ENCODE measurements at regions of chr6 and their contacts with region 1.

Region 1: GRCh38 chr6:43489277-43490072 is 12.1 kb downstream of the TJAP1 start:
- DNase-seq: no peak
- ATAC-seq: no peak
- H3K4me3 ChIP-seq: no peak overlapping the region
- H3K27ac ChIP-seq: no peak overlapping the region
- H3K4me1 ChIP-seq: peaks cover 9 to 19% of the 10 kb centered on the region in 2 experiments
- H3K27me3 ChIP-seq: no peaks in the 10 kb centered on the region
- CTCF ChIP-seq: no peak
- EP300 ChIP-seq: no peak
- POLR2A ChIP-seq: no peak
- RAD21 ChIP-seq: no peak

Region 2: DNA sequence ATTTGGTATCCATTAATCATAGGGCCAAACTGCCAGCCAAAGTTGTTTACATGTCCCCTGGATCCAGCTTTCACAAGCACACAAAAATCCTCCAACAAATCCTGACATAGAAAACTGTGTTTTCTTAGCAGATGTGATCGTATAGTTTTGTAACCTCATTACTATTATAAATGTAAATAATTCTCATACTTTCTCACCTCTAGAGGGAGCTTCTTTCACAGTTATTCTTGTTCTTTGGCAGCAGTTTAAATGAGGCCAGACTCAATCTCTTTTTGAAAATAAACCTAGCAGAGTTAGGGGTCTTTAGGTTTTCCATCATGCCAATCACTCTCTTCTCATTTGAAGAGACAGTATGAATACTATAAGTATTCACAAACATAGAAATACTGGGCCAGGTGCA is 103.0 kb before region 1 on chr6:
- CTCF ChIA-PET with region 1: no interaction called
- POLR2A ChIA-PET with region 1: no interaction called
- in situ Hi-C with region 1: no loop called
- intact Hi-C with region 1: no loop called
- DNase-seq: no peak
- ATAC-seq: no peak
- H3K4me3 ChIP-seq: no peak overlapping the region
- H3K27ac ChIP-seq: no peak overlapping the region
- H3K4me1 ChIP-seq: peaks cover 5 to 15% of the 10 kb centered on the region in 2 experiments
- H3K27me3 ChIP-seq: peaks cover 19 to 22% of the 10 kb centered on the region in 2 experiments
- CTCF ChIP-seq: peak in 1 of 3 experiments; percentile 41; a peak in 2 of 6 replicates
- EP300 ChIP-seq: no peak
- POLR2A ChIP-seq: no peak
- RAD21 ChIP-seq: peak in 1 of 2 experiments; percentile 24; a peak in 2 of 4 replicates

Region 3: GRCh38 chr6:43477235-43478007 is 12.1 kb before region 1 on chr6 and contains the start of gene TJAP1:
- CTCF ChIA-PET with region 1: interaction called, 3 read pairs
- POLR2A ChIA-PET with region 1: interaction called, 24 read pairs
- in situ Hi-C with region 1: no loop called
- intact Hi-C with region 1: no loop called
- DNase-seq: peak; percentile 95 to 98 (median 96)
- ATAC-seq: peak; percentile 99
- H3K4me3 ChIP-seq: peak within 1 kb of the TSS; percentile 80
- H3K27ac ChIP-seq: peak within 1 kb of the TSS; percentile 71
- H3K4me1 ChIP-seq: peaks cover 0 to 19% of the 10 kb centered on the region in 2 experiments; a peak in 4 of 5 replicates
- H3K27me3 ChIP-seq: no peaks in the 10 kb centered on the region
- CTCF ChIP-seq: no peak
- EP300 ChIP-seq: peak; percentile 22; the same call in 1 of the 2 replicates
- POLR2A ChIP-seq: peak; percentile 95
- RAD21 ChIP-seq: no peak
- polyA plus RNA-seq, gene TJAP1: 0.06 to 0.29 TPM